WTC11 (cell line): ENCODE measurements at regions of chr18 and their contacts with region 1.

Region 1: GRCh38 chr18:5546660-5547059 is 2.9 kb upstream of the EPB41L3 start:
- DNase-seq: peak; percentile 36
- ATAC-seq: peak; percentile 54
- H3K4me3 Mint-ChIP-seq: no peak overlapping the region
- H3K27ac Mint-ChIP-seq: no peak overlapping the region
- H3K4me1 Mint-ChIP-seq: peaks cover 19% of the 10 kb centered on the region
- H3K27me3 Mint-ChIP-seq: peaks cover 3% of the 10 kb centered on the region; the same call in 1 of the 2 replicates
- CTCF ChIP-seq: no peak

Region 2: GRCh38 chr18:5456577-5457463 is 89.8 kb before region 1 on chr18:
- CTCF ChIA-PET with region 1: interaction called, 24 read pairs
- POLR2A ChIA-PET with region 1: no interaction called
- DNase-seq: peak; percentile 35
- ATAC-seq: peak; percentile 91
- H3K4me3 Mint-ChIP-seq: peak overlapping the region; percentile 43
- H3K27ac Mint-ChIP-seq: 0 out of 2 replicates have a peak overlapping the region, but pooled peaks have one; percentile 17
- H3K4me1 Mint-ChIP-seq: peaks cover 26% of the 10 kb centered on the region
- H3K27me3 Mint-ChIP-seq: no peaks in the 10 kb centered on the region
- CTCF ChIP-seq: no peak

Region 3: GRCh38 chr18:5467671-5468070 is 79.0 kb before region 1 on chr18:
- CTCF ChIA-PET with region 1: interaction called, 10 read pairs
- POLR2A ChIA-PET with region 1: no interaction called
- DNase-seq: no peak
- ATAC-seq: peak; percentile 51
- H3K4me3 Mint-ChIP-seq: no peak overlapping the region
- H3K27ac Mint-ChIP-seq: no peak overlapping the region
- H3K4me1 Mint-ChIP-seq: peaks cover 12% of the 10 kb centered on the region
- H3K27me3 Mint-ChIP-seq: no peaks in the 10 kb centered on the region
- CTCF ChIP-seq: no peak